ENCODE measurements at regions of chr3 and their contacts with region 1.

Region 1: GRCh38 chr3:120438665-120439370 is 12.0 kb downstream of the FSTL1 start:
- DNase-seq: no peak
- H3K4me3 ChIP-seq: no peak overlapping the region
- H3K27ac ChIP-seq: no peak overlapping the region
- H3K4me1 ChIP-seq: peaks cover 30% of the 10 kb centered on the region
- H3K27me3 ChIP-seq: no peaks in the 10 kb centered on the region
- CTCF ChIP-seq: no peak

Region 2: GRCh38 chr3:120450600-120451271 is 11.9 kb after region 1 on chr3 and contains the start of gene FSTL1:
- CTCF ChIA-PET with region 1: interaction called, 3 read pairs
- POLR2A ChIA-PET with region 1: interaction called, 32 read pairs
- intact Hi-C with region 1: loop called (anchors 1 kb)
- DNase-seq: peak in 1 of 2 experiments; percentile 46
- H3K4me3 ChIP-seq: peak within 1 kb of the TSS; percentile 74
- H3K27ac ChIP-seq: peak within 1 kb of the TSS; percentile 53
- H3K4me1 ChIP-seq: peaks cover 20% of the 10 kb centered on the region
- H3K27me3 ChIP-seq: no peaks in the 10 kb centered on the region
- CTCF ChIP-seq: no peak
- total RNA-seq, gene FSTL1: 225 and 256 TPM in 2 replicates

Region 3: GRCh38 chr3:120469447-120469846 is 30.6 kb after region 1 on chr3:
- CTCF ChIA-PET with region 1: interaction called, 3 read pairs
- POLR2A ChIA-PET with region 1: no interaction called
- intact Hi-C with region 1: loop called (anchors 1 kb)
- DNase-seq: peak; percentile 80 to 95
- H3K4me3 ChIP-seq: peak overlapping the region; percentile 36; the same call in 1 of the 2 replicates
- H3K27ac ChIP-seq: peak overlapping the region; percentile 99
- H3K4me1 ChIP-seq: peaks cover 50% of the 10 kb centered on the region
- H3K27me3 ChIP-seq: no peaks in the 10 kb centered on the region
- CTCF ChIP-seq: no peak

Region 4: DNA sequence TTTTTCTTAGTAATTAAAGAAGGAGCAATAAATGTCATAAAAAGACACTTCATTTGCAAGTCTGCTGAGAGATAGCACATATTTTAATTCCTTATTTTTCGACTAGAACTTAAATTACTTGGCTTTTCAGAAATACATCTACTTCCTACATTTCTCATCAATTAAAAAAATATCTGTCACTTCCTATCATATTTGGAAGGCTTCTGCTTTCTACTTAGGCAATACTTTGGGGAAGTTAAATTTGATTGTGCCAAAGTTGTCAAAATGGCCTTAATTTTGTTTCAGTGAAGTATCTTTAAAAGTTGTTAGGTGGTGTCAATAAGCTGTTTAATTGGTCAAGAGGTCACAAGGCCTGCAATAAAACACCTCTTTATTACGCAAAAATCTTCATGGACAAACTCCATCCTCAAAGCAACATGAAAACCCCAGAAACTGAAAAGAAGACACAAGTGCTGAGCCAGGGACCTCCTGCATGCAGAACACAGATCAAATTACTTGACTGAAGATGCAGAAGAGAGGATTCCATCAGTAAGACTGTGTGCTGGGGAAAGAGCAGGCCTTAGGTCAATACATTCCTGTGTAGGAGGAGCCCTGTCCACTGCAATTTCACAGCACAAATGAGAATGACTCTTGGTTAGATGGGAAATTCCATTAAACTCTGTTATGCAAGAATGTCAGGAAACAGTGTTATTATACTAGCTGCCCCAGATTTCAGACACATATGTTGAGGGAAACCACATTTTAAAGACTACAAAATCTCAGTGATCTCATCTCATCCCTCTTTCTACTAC is 59.9 kb after region 1 on chr3:
- CTCF ChIA-PET with region 1: no interaction called
- POLR2A ChIA-PET with region 1: interaction called, 3 read pairs
- intact Hi-C with region 1: loop called (anchors 10 kb)
- DNase-seq: peak; percentile 46 to 82
- H3K4me3 ChIP-seq: no peak overlapping the region
- H3K27ac ChIP-seq: peak overlapping the region; percentile 20
- H3K4me1 ChIP-seq: peaks cover 22% of the 10 kb centered on the region
- H3K27me3 ChIP-seq: no peaks in the 10 kb centered on the region
- CTCF ChIP-seq: no peak

Region 5: DNA sequence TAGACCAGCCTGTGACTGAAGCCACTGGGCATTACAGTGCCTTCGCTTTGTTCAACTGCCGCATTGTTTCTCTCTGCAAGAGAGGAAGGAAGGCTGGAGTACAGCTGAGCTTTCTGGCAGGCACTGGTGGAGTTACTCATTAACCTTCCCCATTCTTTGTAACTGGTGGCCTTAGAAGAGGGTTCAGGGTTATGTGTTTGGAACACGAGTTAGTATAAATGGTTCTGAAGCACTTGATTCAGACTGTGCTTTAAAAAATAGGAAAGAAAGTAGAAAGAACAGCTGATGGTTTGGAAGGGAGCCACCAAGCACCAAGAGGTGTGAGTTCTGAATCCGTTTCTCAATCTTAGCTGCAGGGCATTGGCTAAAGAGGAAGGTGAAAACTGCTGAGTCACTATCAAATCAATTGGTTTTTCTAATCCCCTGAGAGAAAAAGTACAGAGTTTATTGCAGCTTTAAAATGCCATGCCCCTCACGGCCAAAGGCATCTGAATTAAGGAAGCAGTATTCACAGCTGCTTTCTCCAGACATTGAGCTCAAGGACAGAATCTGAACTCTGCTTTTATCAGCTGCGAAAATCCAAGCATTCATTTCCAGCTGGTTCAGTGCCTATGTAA is 239.6 kb after region 1 on chr3:
- CTCF ChIA-PET with region 1: no interaction called
- POLR2A ChIA-PET with region 1: interaction called, 12 read pairs
- intact Hi-C with region 1: no loop called
- DNase-seq: peak; percentile 33 to 67
- H3K4me3 ChIP-seq: 0 out of 2 replicates have a peak overlapping the region, but pooled peaks have one; percentile 29
- H3K27ac ChIP-seq: peak overlapping the region; percentile 79
- H3K4me1 ChIP-seq: peaks cover 15% of the 10 kb centered on the region
- H3K27me3 ChIP-seq: no peaks in the 10 kb centered on the region
- CTCF ChIP-seq: no peak